K562 (cell line): ENCODE measurements at regions of chrX and their contacts with region 1.

Region 1: DNA sequence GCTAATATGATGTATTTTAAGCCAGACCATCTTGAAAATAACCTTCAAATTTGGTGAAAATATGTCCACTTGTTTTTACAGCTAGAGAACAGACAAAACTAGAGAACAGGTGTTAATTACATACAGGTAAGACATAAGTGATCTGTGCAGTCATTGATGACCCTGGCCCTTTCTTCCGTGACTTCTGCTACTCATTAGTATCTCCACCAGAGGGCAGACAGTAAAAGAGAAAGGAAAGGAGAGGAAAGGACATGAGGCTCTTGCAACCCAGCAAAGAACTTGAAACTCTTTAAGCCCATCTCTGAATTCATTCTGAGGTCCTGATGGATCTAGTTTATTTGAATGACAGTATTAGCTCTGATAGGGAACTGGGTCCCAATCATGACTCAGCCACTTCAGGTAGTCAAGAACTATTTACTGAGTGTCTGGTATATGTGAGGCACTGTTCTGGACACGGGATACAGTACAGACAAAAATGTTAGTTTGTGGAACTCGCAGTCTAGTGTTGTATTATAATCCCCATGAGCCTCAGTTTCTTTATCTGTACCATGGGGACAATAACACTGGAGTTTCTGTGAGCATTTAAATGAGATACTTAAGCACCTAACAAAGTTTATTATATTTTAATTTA is 121.0 kb upstream of the TEX13D start:
- DNase-seq: peak; percentile 15 to 46 (median 23)
- ATAC-seq: peak; percentile 95
- H3K4me3 ChIP-seq: no peak overlapping the region
- H3K27ac ChIP-seq: no peak overlapping the region
- H3K4me1 ChIP-seq: peaks cover 0 to 3% of the 10 kb centered on the region in 2 experiments; a peak in 1 of 5 replicates
- H3K27me3 ChIP-seq: no peaks in the 10 kb centered on the region
- CTCF ChIP-seq: peak; percentile 50 to 63 (median 62); a peak in 5 of 6 replicates
- EP300 ChIP-seq: no peak
- POLR2A ChIP-seq: no peak
- RAD21 ChIP-seq: peak; percentile 53 to 73

Region 2: GRCh38 chrX:124098089-124098488 is 113.3 kb before region 1 on chrX:
- CTCF ChIA-PET with region 1: interaction called, 3 read pairs
- POLR2A ChIA-PET with region 1: no interaction called
- in situ Hi-C with region 1: no loop called
- intact Hi-C with region 1: loop called (anchors 5 kb)
- DNase-seq: peak in 2 of 4 experiments; percentile 12 to 25
- ATAC-seq: peak; percentile 77
- H3K4me3 ChIP-seq: no peak overlapping the region
- H3K27ac ChIP-seq: no peak overlapping the region
- H3K4me1 ChIP-seq: no peaks in the 10 kb centered on the region
- H3K27me3 ChIP-seq: no peaks in the 10 kb centered on the region
- CTCF ChIP-seq: peak in 2 of 3 experiments; percentile 28 to 51; a peak in 3 of 6 replicates
- EP300 ChIP-seq: no peak
- POLR2A ChIP-seq: no peak
- RAD21 ChIP-seq: peak; percentile 33 to 52; a peak in 3 of 4 replicates

Region 3: DNA sequence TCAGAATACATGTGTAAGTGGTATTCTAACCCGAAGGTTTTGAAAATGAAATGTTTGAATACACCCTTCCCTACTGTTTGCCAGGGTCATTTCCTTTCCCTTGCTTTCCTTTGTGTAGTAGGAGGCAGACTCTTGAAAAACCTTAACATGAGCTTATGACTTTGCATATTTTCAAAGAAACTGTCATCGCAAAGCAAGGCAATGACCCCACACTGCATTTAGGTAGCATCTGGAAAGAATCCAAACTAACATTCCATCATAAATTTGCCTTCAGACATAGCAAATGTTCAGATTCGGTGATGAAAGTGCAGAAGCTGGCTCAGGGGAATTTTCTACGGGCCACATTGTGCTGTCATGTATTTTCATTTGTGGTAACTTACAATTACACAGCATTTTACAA is 167.2 kb after region 1 on chrX:
- CTCF ChIA-PET with region 1: no interaction called
- POLR2A ChIA-PET with region 1: no interaction called
- in situ Hi-C with region 1: no loop called
- intact Hi-C with region 1: loop called (anchors 5 kb)
- DNase-seq: peak in 2 of 4 experiments; percentile 22 to 36
- ATAC-seq: peak; percentile 86
- H3K4me3 ChIP-seq: no peak overlapping the region
- H3K27ac ChIP-seq: peak overlapping the region; percentile 71
- H3K4me1 ChIP-seq: peaks cover 0 to 6% of the 10 kb centered on the region in 2 experiments; a peak in 2 of 5 replicates
- H3K27me3 ChIP-seq: no peaks in the 10 kb centered on the region
- CTCF ChIP-seq: no peak
- EP300 ChIP-seq: no peak
- POLR2A ChIP-seq: no peak
- RAD21 ChIP-seq: no peak